ENCODE measurements at regions of chr3 and their contacts with region 1.

Region 1: DNA sequence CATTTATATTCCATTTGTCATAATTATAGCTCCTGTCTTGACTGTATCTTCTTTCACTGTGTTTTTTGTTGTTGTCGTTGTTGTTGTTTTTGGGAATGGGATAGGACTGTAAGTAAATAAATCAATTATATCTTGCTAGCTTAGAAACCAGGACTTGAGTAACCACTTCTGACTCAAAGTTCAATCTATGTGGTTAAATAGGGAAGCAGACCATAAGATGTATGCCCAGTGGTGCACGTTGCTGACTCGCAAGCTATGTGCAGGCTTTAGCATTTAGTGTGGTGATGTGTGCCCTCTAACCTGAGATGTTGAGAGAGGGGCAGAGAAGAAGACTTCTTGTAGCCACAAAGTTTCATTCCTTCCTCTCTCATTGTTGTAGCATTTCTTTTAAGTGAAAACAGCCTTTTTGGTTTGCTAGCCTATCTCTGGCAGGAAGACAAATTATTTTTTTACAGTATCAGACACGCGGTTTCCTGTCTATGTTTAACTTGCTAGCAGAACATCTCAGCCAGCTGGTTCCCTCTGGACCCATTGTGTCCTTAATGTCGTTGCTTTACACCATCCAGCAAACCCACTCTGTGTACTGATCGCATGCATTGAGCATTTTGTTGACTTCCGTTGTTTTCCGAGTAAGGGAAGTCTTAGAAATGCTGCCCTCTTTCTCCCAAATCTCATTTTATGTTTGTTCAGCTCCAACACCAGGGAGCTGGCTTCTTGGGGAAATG is 52.1 kb downstream of the TGFBR2 start:
- DNase-seq: peak; percentile 68 to 77 (median 70)
- H3K4me3 ChIP-seq: peak overlapping the region; percentile 3 to 5
- H3K4me3 Mint-ChIP-seq: peak overlapping the region; percentile 62 to 87 (median 72)
- H3K27ac ChIP-seq: peak overlapping the region; percentile 80
- H3K27ac Mint-ChIP-seq: peak overlapping the region; percentile 90 to 98 (median 94)
- H3K4me1 ChIP-seq: peaks cover 100% of the 10 kb centered on the region
- H3K4me1 Mint-ChIP-seq: peaks cover 76 to 99% (median 90%) of the 10 kb centered on the region in 4 donors
- H3K27me3 ChIP-seq: no peaks in the 10 kb centered on the region
- H3K27me3 Mint-ChIP-seq: no peaks in the 10 kb centered on the region

Region 2: DNA sequence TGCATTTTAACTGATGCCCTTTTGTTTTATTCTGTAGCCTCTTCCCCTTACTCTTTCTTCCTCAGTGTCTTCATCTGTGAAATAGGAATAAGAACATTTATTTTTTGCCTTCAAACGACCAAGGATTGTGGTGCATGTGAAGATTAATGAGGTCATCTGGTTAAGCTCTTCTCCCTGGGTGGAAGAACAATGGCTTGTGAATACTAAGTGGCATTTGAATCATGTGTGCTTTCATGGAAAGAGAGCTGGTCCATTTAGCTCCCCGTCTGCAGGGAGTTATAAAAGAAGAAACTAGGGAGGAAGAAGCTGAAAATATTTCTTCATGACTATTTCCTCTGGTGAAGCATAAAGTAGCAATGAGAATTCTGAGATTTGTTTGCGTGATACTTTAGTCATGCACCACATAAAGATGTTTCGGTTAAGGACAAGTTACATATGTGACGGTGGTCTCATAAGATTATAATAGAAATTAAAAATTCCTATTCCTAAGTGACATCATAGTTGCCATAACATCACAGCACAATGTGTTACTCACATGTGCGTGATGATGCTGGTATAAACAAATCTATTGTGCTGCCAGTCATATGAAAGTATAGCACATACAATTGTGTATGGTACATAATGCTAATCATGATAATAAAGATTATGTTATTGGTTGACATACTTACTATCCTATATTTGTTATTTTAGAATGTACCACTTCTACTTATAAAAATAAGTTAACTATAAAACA is 1003.3 kb before region 1 on chr3:
- CTCF ChIA-PET with region 1: no interaction called
- POLR2A ChIA-PET with region 1: no interaction called
- intact Hi-C with region 1: no loop called
- DNase-seq: no peak
- H3K4me3 ChIP-seq: no peak overlapping the region
- H3K4me3 Mint-ChIP-seq: no peak overlapping the region
- H3K27ac ChIP-seq: no peak overlapping the region
- H3K27ac Mint-ChIP-seq: no peak overlapping the region
- H3K4me1 ChIP-seq: no peaks in the 10 kb centered on the region
- H3K4me1 Mint-ChIP-seq: no peaks in the 10 kb centered on the region
- H3K27me3 ChIP-seq: no peaks in the 10 kb centered on the region
- H3K27me3 Mint-ChIP-seq: no peaks in the 10 kb centered on the region

Region 3: GRCh38 chr3:30353711-30354467 is 304.6 kb before region 1 on chr3:
- CTCF ChIA-PET with region 1: no interaction called
- POLR2A ChIA-PET with region 1: interaction called, 11 read pairs
- intact Hi-C with region 1: no loop called
- DNase-seq: peak; percentile 82 to 91 (median 86)
- H3K4me3 ChIP-seq: peak overlapping the region in 1 of 2 donors; percentile 33
- H3K4me3 Mint-ChIP-seq: peak overlapping the region; percentile 13 to 81 (median 64)
- H3K27ac ChIP-seq: no peak overlapping the region
- H3K27ac Mint-ChIP-seq: peak overlapping the region; percentile 29 to 79 (median 69)
- H3K4me1 ChIP-seq: peaks cover 67% of the 10 kb centered on the region
- H3K4me1 Mint-ChIP-seq: peaks cover 50 to 79% (median 63%) of the 10 kb centered on the region in 4 donors
- H3K27me3 ChIP-seq: no peaks in the 10 kb centered on the region
- H3K27me3 Mint-ChIP-seq: peaks cover under 1 to 5% of the 10 kb centered on the region in 2 donors

Region 4: GRCh38 chr3:30611613-30612436 is 46.7 kb before region 1 on chr3:
- CTCF ChIA-PET with region 1: interaction called, 11 read pairs
- POLR2A ChIA-PET with region 1: interaction called, 318 read pairs
- intact Hi-C with region 1: loop called (anchors 2 kb)
- DNase-seq: peak in 4 of 5 donors; percentile 47 to 57 (median 50)
- H3K4me3 ChIP-seq: peak overlapping the region in 1 of 2 donors; percentile 14
- H3K4me3 Mint-ChIP-seq: peak overlapping the region; percentile 90 to 99 (median 98)
- H3K27ac ChIP-seq: peak overlapping the region; percentile 72
- H3K27ac Mint-ChIP-seq: peak overlapping the region; percentile 88 to 96 (median 93)
- H3K4me1 ChIP-seq: peaks cover 75% of the 10 kb centered on the region
- H3K4me1 Mint-ChIP-seq: peaks cover 66 to 84% (median 70%) of the 10 kb centered on the region in 4 donors
- H3K27me3 ChIP-seq: no peaks in the 10 kb centered on the region
- H3K27me3 Mint-ChIP-seq: no peaks in the 10 kb centered on the region

Region 5: GRCh38 chr3:30623351-30623750 is 35.1 kb before region 1 on chr3:
- CTCF ChIA-PET with region 1: interaction called, 13 read pairs
- POLR2A ChIA-PET with region 1: interaction called, 580 read pairs
- intact Hi-C with region 1: no loop called
- DNase-seq: peak in 1 of 5 donors; percentile 41
- H3K4me3 ChIP-seq: no peak overlapping the region
- H3K4me3 Mint-ChIP-seq: peak overlapping the region; percentile 6 to 86 (median 69)
- H3K27ac ChIP-seq: peak overlapping the region; percentile 40
- H3K27ac Mint-ChIP-seq: peak overlapping the region; percentile 38 to 92 (median 90)
- H3K4me1 ChIP-seq: peaks cover 99% of the 10 kb centered on the region
- H3K4me1 Mint-ChIP-seq: peaks cover 70 to 98% (median 83%) of the 10 kb centered on the region in 4 donors
- H3K27me3 ChIP-seq: no peaks in the 10 kb centered on the region
- H3K27me3 Mint-ChIP-seq: no peaks in the 10 kb centered on the region

Region 6: DNA sequence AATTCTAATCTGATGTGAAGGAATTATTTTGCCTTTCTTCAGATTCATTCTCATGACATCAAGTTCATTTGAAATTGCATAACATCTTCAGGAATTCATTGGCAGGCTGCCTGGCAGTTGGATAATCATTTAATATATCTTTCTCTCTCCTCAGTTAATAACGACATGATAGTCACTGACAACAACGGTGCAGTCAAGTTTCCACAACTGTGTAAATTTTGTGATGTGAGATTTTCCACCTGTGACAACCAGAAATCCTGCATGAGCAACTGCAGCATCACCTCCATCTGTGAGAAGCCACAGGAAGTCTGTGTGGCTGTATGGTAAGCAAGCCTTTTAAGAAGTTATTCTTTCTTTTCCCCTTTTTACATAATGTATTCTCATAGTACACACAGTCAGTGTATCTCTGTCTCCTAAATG is 13.9 kb before region 1 on chr3:
- CTCF ChIA-PET with region 1: interaction called, 12 read pairs
- POLR2A ChIA-PET with region 1: interaction called, 580 read pairs
- intact Hi-C with region 1: loop called (anchors 1 kb)
- DNase-seq: peak; percentile 61 to 87 (median 66)
- H3K4me3 ChIP-seq: peak overlapping the region in 1 of 2 donors; percentile 37
- H3K4me3 Mint-ChIP-seq: peak overlapping the region; percentile 71 to 86 (median 78)
- H3K27ac ChIP-seq: peak overlapping the region; percentile 66
- H3K27ac Mint-ChIP-seq: peak overlapping the region; percentile 88 to 97 (median 93)
- H3K4me1 ChIP-seq: peaks cover 99% of the 10 kb centered on the region
- H3K4me1 Mint-ChIP-seq: peaks cover 77 to 97% (median 87%) of the 10 kb centered on the region in 4 donors
- H3K27me3 ChIP-seq: no peaks in the 10 kb centered on the region
- H3K27me3 Mint-ChIP-seq: no peaks in the 10 kb centered on the region

Region 7: DNA sequence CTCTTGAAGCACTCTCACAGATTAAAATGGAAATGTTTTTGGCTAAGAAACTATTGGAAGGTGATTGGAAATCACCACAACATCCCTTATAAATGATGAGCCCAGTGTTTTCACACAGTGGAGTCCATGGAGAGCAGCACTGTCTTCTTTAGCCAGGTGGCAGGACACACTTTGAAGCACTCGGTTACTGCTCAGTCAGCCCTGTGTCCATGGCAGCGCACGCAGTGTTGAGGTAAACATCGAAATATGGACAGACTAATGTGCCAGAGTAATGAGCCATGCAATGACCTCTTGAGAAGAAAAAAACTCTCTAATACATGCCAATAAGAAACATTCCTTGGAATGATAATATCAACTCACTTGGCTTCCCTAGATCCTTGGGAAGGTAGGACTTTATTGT is 14.5 kb after region 1 on chr3:
- CTCF ChIA-PET with region 1: interaction called, 5 read pairs
- POLR2A ChIA-PET with region 1: interaction called, 103 read pairs
- intact Hi-C with region 1: no loop called
- DNase-seq: no peak
- H3K4me3 ChIP-seq: no peak overlapping the region
- H3K4me3 Mint-ChIP-seq: peak overlapping the region; percentile 32 to 81 (median 72)
- H3K27ac ChIP-seq: no peak overlapping the region
- H3K27ac Mint-ChIP-seq: peak overlapping the region in 6 of 7 donors; percentile 69 to 86 (median 76)
- H3K4me1 ChIP-seq: peaks cover 91% of the 10 kb centered on the region
- H3K4me1 Mint-ChIP-seq: peaks cover 75 to 100% (median 88%) of the 10 kb centered on the region in 4 donors
- H3K27me3 ChIP-seq: no peaks in the 10 kb centered on the region
- H3K27me3 Mint-ChIP-seq: no peaks in the 10 kb centered on the region

Region 8: GRCh38 chr3:30681643-30682211 is 23.2 kb after region 1 on chr3:
- CTCF ChIA-PET with region 1: interaction called, 4 read pairs
- POLR2A ChIA-PET with region 1: interaction called, 12 read pairs
- intact Hi-C with region 1: no loop called
- DNase-seq: no peak
- H3K4me3 ChIP-seq: no peak overlapping the region
- H3K4me3 Mint-ChIP-seq: peak overlapping the region in 7 of 8 donors; percentile 40 to 74 (median 58)
- H3K27ac ChIP-seq: no peak overlapping the region
- H3K27ac Mint-ChIP-seq: peak overlapping the region; percentile 40 to 89 (median 81)
- H3K4me1 ChIP-seq: peaks cover 87% of the 10 kb centered on the region
- H3K4me1 Mint-ChIP-seq: peaks cover 65 to 97% (median 82%) of the 10 kb centered on the region in 4 donors
- H3K27me3 ChIP-seq: no peaks in the 10 kb centered on the region
- H3K27me3 Mint-ChIP-seq: no peaks in the 10 kb centered on the region